CD8-positive, alpha-beta memory T cell (primary cell): ENCODE measurements at regions of chr20 and their contacts with region 1.

Region 1: DNA sequence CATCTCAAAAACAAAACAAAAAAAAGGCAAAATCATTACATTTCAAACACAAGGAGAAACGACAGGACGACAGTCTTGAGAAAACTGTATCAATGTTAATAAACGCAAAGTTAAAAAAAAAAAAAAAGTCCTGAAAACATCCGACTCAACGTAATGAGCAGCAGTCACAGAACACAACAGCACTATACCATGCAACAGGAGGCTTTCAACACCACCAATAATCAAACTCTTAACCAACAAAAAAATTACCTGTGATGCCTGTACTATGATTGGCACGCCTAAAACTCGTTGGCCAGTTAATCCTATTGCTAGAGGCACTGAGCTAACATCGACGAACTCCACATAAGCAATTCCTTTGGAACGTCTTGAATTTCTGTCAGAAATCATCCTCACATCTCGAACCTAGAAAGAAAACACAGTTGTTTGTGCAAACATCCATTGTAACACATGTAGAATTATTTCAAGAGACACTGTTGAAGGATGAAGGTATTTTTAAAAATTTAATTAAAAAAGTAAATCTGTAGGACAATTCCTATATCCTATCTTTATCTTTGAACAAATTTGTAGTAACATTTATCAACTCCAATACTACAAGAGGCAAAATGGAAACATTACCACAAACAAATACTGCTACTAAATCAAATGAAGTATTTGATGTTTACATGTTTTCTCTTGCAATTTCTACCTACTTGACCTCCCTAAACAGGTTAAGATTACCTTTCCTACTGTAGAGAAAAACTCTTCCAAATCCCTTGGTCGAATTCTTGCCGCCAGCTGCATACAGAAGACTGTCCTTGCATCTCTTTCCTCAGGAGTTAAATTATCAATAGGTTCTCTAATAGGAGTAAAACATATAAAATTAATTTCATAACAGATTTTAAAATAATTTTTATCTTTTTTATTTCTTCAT is 17.5 kb downstream of the RBM39 start:
- DNase-seq: no peak
- H3K4me3 ChIP-seq: no peak overlapping the region
- H3K4me3 Mint-ChIP-seq: peak overlapping the region in 1 of 7 donors; percentile 16
- H3K27ac ChIP-seq: no peak overlapping the region
- H3K27ac Mint-ChIP-seq: peak overlapping the region in 5 of 8 donors; percentile 31 to 79 (median 44)
- H3K4me1 ChIP-seq: peaks cover 6% of the 10 kb centered on the region
- H3K4me1 Mint-ChIP-seq: peaks cover 44 to 59% (median 54%) of the 10 kb centered on the region in 3 donors
- H3K27me3 ChIP-seq: no peaks in the 10 kb centered on the region
- H3K27me3 Mint-ChIP-seq: no peaks in the 10 kb centered on the region

Region 2: GRCh38 chr20:35735828-35736470 is 11.4 kb after region 1 on chr20:
- CTCF ChIA-PET with region 1: interaction called, 3 read pairs
- POLR2A ChIA-PET with region 1: interaction called, 10 read pairs
- DNase-seq: no peak
- H3K4me3 ChIP-seq: no peak overlapping the region
- H3K4me3 Mint-ChIP-seq: peak overlapping the region; percentile 63 to 74 (median 72)
- H3K27ac ChIP-seq: no peak overlapping the region
- H3K27ac Mint-ChIP-seq: peak overlapping the region; percentile 34 to 91 (median 59)
- H3K4me1 ChIP-seq: peaks cover 90% of the 10 kb centered on the region
- H3K4me1 Mint-ChIP-seq: peaks cover 73 to 90% (median 85%) of the 10 kb centered on the region in 3 donors
- H3K27me3 ChIP-seq: no peaks in the 10 kb centered on the region
- H3K27me3 Mint-ChIP-seq: peaks cover 0 to 3% of the 10 kb centered on the region in 2 donors

Region 3: GRCh38 chr20:36064658-36065426 is 340.3 kb after region 1 on chr20:
- CTCF ChIA-PET with region 1: no interaction called
- POLR2A ChIA-PET with region 1: no interaction called
- DNase-seq: peak; percentile 90 to 95 (median 93)
- H3K4me3 ChIP-seq: peak overlapping the region; percentile 83
- H3K4me3 Mint-ChIP-seq: peak overlapping the region; percentile 88 to 95 (median 90)
- H3K27ac ChIP-seq: peak overlapping the region; percentile 54
- H3K27ac Mint-ChIP-seq: peak overlapping the region in 7 of 8 donors; percentile 50 to 91 (median 83)
- H3K4me1 ChIP-seq: peaks cover 4% of the 10 kb centered on the region
- H3K4me1 Mint-ChIP-seq: peaks cover 0 to 4% (median 0%) of the 10 kb centered on the region in 3 donors
- H3K27me3 ChIP-seq: no peaks in the 10 kb centered on the region
- H3K27me3 Mint-ChIP-seq: peaks cover 5 to 13% of the 10 kb centered on the region in 2 donors